IMR-90 (cell line): ENCODE measurements at regions of chrX and their contacts with region 1.

Region 1: DNA sequence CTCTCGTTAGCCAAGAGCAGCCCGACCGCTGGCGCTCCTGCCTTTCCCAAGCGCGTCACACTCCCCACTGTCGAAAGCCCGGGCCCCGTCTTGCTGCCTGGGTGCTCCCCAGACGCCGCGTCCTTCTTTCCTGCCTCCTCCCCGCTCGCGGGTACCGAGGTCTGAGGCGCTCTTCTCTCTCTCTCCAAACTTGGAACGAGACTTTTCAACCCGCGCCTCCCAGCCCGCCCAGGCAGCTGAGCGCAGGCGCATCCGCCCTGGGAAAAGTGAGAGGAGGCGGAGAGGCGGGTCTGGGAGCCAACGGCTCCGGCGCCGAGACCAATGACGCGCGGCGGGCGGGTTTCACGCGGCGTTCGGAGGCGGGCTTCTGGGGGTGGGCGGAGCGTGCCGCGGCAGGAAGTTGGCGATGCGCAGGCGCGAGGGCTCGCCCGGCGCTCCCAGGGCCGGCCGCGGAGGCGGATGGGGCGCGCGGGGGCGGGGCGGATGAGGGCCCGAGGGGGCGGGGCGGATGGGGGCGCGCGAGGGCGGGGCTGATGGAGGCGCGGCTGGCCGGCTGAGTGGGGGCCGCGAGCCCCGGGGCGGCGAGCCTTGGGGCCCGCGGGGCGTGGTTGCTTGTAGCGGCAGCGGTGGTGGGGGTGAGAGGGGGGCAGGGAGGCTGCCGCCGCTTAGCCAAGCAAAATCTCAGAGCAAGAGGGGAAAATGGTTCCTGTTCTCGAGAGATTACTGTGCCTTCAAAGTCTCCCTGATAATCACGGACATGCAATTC is at the start of gene RBBP7:
- DNase-seq: peak; percentile 89
- ATAC-seq: peak; percentile 91
- H3K4me3 ChIP-seq: peak within 1 kb of the TSS; percentile 66
- H3K27ac ChIP-seq: peak within 1 kb of the TSS; percentile 92
- H3K4me1 ChIP-seq: peaks cover 8% of the 10 kb centered on the region
- H3K27me3 ChIP-seq: peaks cover 9% of the 10 kb centered on the region
- CTCF ChIP-seq: no peak
- POLR2A ChIP-seq: peak; percentile 94
- RAD21 ChIP-seq: no peak
- total RNA-seq, gene RBBP7: 132 and 147 TPM in 2 replicates

Region 2: DNA sequence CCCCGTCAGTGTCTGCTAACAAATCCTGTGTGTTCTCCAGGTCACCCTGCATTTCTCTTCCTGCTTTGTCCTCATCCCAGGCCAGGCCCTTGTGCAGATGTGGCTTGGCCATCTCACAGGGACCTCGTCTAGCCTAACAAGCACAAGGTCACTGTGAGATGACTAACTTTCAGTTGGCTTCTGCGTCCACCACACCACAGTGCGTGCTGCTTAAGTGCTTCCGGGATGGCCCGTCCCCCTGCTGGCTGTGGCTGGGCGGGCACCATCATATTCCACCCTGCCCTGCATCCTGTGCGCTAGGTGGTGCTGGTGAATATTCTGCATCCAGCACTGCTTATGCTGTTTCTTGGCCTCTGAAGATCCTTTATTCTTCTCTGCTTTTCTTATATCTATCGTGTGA is 33.9 kb before region 1 on chrX:
- CTCF ChIA-PET with region 1: no interaction called
- POLR2A ChIA-PET with region 1: no interaction called
- dilution Hi-C with region 1: no loop called
- in situ Hi-C with region 1: no loop called
- intact Hi-C with region 1: loop called (anchors 1 kb)
- DNase-seq: peak; percentile 13
- ATAC-seq: no peak
- H3K4me3 ChIP-seq: no peak overlapping the region
- H3K27ac ChIP-seq: no peak overlapping the region
- H3K4me1 ChIP-seq: peaks cover 16% of the 10 kb centered on the region
- H3K27me3 ChIP-seq: no peaks in the 10 kb centered on the region
- CTCF ChIP-seq: peak; percentile 49
- POLR2A ChIP-seq: no peak
- RAD21 ChIP-seq: no peak

Region 3: DNA sequence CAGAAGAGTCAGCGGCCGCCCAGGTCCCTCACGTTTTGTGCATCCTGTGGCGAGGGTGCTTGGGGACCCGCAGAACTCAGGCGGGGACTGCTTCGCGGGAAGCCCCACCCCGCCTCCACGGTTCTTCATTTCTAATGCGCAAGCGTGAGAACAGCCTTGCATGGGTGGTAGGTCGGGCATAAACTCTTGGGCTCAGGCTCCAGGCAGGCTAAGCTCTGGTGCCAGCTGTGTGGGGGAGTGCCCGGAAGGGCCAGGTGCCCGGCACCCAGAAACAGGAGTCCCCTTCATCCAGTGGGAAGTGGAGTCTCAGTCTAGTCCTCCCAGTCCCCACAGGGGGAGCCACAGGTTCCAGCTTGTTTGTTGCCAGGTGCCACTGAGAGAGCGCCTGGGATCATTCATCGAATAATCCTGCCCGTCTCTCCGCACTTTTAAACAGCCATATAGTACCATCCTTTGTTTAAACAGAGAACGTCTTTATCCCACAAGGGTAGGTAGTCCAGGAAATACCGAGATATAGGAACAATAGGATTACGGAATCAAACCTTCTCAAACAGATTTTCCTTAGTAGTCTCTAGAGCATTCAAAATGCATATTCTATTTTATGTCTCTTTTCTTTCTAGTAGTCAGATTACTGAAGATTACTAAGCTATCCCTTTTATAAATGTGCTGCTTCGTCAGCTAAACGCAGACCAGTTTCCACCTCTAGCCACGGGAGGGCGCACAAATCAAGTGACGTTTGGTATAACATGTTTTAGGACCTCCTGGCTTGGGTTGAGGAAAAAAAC is 12.6 kb after region 1 on chrX:
- CTCF ChIA-PET with region 1: interaction called, 10 read pairs
- POLR2A ChIA-PET with region 1: no interaction called
- dilution Hi-C with region 1: no loop called
- in situ Hi-C with region 1: no loop called
- intact Hi-C with region 1: no loop called
- DNase-seq: peak; percentile 64
- ATAC-seq: peak; percentile 90
- H3K4me3 ChIP-seq: peak overlapping the region; percentile 37
- H3K27ac ChIP-seq: no peak overlapping the region
- H3K4me1 ChIP-seq: 0 out of 2 replicates have a peak, but pooled peaks cover 2% of the 10 kb centered on the region
- H3K27me3 ChIP-seq: peaks cover 17% of the 10 kb centered on the region
- CTCF ChIP-seq: peak; percentile 71
- POLR2A ChIP-seq: no peak
- RAD21 ChIP-seq: peak; percentile 58

Region 4: DNA sequence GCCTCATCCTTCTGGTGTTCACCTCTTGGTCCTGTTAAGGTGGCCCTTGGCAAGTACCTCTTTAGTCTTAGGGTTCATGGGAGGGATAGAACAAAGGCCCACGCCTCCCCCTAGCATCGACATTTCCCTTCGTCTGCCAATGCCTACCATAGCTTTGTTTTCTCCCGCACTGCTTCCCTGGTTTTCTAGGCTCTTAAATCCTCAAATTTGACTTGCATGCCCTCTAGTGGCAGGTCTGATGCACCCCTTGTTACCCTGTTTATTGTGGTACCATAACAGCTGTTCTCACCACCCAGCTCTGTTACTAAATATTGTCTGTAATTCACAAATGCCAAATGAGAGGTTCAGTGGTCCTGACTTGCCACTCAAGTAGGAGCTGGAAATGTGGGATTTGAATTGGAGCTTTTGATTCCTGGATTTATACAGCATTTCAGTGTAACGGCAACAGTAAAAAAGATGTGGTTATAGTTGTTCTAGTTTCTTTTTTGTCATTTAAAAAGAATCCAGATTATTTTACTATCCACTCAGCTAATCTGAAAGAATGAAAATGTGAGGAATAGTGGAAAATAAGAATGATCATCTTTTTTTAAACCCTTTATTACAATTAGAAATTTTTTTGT is 176.3 kb after region 1 on chrX:
- CTCF ChIA-PET with region 1: interaction called, 3 read pairs
- POLR2A ChIA-PET with region 1: no interaction called
- dilution Hi-C with region 1: no loop called
- in situ Hi-C with region 1: no loop called
- intact Hi-C with region 1: loop called (anchors 1 kb)
- DNase-seq: peak; percentile 67
- ATAC-seq: peak; percentile 93
- H3K4me3 ChIP-seq: no peak overlapping the region
- H3K27ac ChIP-seq: no peak overlapping the region
- H3K4me1 ChIP-seq: no peaks in the 10 kb centered on the region
- H3K27me3 ChIP-seq: peaks cover 3% of the 10 kb centered on the region
- CTCF ChIP-seq: peak; percentile 72
- POLR2A ChIP-seq: no peak
- RAD21 ChIP-seq: peak; percentile 80